Caco-2 (cell line): ENCODE measurements at regions of chr1 and their contacts with region 1.

Region 1: DNA sequence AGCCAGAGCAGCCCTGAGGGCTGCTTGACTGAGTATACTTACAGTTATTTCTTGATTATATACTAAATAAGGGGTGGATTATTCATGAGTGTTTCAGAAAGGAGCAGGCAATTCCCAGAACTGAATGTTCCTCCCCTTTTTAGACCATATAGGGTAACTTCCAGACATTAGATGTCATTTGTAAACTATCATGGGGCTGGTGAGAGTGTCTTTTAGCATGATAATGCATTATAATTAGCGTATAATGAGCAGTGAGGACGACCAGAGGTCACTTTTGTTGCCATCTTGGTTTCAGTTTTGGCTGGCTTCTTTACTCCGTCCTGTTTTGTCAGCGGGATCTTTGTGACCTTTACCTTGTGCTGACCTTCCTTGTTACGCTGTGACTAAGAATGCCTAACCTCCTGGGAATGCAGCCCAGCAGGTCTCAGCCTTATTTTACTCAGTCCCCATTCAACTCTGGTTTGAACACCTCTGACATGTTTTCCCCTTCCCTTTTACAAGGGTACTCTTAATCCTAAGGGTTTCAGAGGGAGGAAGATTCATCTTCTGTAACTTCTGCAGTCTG is 16.2 kb downstream of the KCTD3 start:
- DNase-seq: peak; percentile 79 to 83
- H3K4me3 ChIP-seq: peak overlapping the region; percentile 25
- H3K4me3 Mint-ChIP-seq: peak overlapping the region; percentile 67
- H3K27ac Mint-ChIP-seq: peak overlapping the region; percentile 88
- H3K4me1 ChIP-seq: peaks cover 24% of the 10 kb centered on the region
- H3K4me1 Mint-ChIP-seq: peaks cover 22% of the 10 kb centered on the region
- H3K27me3 ChIP-seq: no peaks in the 10 kb centered on the region
- H3K27me3 Mint-ChIP-seq: no peaks in the 10 kb centered on the region
- CTCF ChIP-seq: no peak

Region 2: DNA sequence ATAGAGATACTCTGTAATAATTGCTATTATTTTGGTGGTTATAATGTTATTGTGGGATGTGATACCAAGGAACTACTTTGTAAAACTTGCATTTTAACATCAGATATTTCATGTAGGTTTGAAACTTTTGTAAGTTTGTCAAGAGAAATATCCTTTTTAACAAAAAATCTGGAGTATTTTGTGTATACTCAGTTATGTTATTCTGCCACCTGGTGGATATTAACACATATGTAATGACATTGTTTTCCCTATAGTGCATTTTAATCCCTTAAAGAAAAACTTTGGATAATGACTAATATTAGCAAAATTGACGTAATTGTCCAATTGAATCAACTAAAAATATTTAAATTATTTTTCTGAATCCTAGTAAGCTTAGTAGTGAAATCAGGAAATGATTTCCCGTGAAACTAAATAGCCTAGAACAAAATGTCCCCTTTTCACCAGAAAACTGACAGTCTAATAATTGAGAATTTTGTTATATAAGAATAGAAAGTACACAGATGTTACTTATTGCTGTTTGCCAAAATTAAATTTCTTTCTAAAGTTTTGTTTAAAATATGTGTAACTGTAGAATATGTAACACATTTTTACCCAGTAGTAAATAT is 23.4 kb after region 1 on chr1:
- CTCF ChIA-PET with region 1: no interaction called
- POLR2A ChIA-PET with region 1: no interaction called
- intact Hi-C with region 1: loop called (anchors 1 kb)
- DNase-seq: no peak
- H3K4me3 ChIP-seq: no peak overlapping the region
- H3K4me3 Mint-ChIP-seq: peak overlapping the region; percentile 44
- H3K27ac Mint-ChIP-seq: peak overlapping the region; percentile 68
- H3K4me1 ChIP-seq: peaks cover 38% of the 10 kb centered on the region
- H3K4me1 Mint-ChIP-seq: peaks cover 32% of the 10 kb centered on the region
- H3K27me3 ChIP-seq: no peaks in the 10 kb centered on the region
- H3K27me3 Mint-ChIP-seq: no peaks in the 10 kb centered on the region
- CTCF ChIP-seq: peak in 1 of 2 experiments; percentile 53

Region 3: GRCh38 chr1:215650446-215651149 is 67.3 kb after region 1 on chr1:
- CTCF ChIA-PET with region 1: no interaction called
- POLR2A ChIA-PET with region 1: no interaction called
- intact Hi-C with region 1: no loop called
- DNase-seq: no peak
- H3K4me3 ChIP-seq: no peak overlapping the region
- H3K4me3 Mint-ChIP-seq: no peak overlapping the region
- H3K27ac Mint-ChIP-seq: no peak overlapping the region
- H3K4me1 ChIP-seq: no peaks in the 10 kb centered on the region
- H3K4me1 Mint-ChIP-seq: no peaks in the 10 kb centered on the region
- H3K27me3 ChIP-seq: no peaks in the 10 kb centered on the region
- H3K27me3 Mint-ChIP-seq: no peaks in the 10 kb centered on the region
- CTCF ChIP-seq: no peak